ENCODE measurements at regions of chr10 and their contacts with region 1.

Region 1: DNA sequence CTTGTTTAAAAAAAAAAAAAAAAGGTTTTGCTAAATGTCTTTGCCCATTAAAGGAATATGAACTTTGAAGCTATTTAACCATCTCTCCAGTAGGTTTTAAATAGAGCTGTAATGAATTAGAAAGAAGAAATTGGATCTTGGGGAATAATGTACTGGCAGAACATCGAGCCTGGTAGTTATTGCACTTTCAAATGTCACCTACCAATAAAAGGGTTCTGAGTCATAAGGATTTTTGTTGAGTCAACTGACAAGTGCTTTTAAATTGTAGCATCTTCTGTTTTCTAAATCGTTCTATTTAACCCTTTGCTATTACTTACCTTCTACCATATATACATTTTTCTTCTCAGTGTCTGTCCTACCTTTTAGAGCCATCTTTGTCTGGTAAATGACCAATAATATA is 10.7 kb downstream of the CUTC start:
- DNase-seq: no peak
- ATAC-seq: peak; percentile 86 to 88
- H3K4me3 ChIP-seq: peak overlapping the region in 2 of 4 donors; percentile 20
- H3K27ac ChIP-seq: peak overlapping the region; percentile 95 to 99 (median 99)
- H3K4me1 ChIP-seq: peaks cover 76 to 80% of the 10 kb centered on the region in 2 donors
- H3K27me3 ChIP-seq: no peaks in the 10 kb centered on the region
- CTCF ChIP-seq: peak in 1 of 5 experiments; percentile 24
- POLR2A ChIP-seq: no peak

Region 2: DNA sequence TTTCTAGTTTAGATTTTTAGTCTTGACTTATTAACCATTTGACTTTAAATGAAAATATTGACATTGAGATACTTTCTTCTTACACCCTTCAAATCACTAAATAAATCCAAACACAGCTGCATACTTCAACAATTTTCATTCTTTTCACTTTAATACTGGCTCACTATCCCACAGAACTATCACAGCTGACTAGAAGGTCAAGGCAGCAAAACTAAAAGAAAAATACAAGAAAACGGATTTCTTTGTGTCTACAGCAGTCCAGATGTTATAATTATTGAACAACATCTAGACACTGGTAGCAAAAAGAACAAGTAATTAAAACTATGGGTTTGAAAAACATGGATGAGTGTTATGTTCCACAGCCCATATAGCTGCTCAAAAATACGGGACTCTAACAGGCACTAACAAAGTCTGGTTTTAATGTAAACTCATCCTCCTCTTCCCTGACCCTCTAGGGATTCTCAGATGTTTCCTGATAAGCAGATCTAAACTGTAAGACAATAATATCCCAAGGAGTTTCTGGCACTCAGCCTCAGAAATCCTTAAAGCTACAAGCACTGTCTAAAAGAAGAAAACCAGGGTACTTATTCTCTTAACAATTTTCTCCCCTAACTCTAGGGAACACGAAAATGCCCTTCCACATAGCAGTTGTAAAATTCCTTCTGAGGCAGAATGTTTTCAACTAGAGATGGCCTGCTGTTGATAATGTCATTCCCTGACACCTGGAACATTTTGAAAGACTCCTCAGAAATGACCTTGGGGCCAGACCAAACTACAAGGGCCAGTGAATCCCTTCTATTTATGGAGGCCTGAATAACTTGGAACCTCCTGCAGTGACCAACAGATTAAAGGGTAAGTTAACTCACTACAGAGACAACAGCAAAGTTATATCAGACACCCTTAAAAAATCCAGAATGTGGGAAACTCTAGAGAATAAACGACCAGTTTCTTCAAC is 254.2 kb after region 1 on chr10:
- in situ Hi-C with region 1: no loop called
- intact Hi-C with region 1: loop called (anchors 5 kb)
- DNase-seq: peak; percentile 10 to 50
- ATAC-seq: peak; percentile 86 to 90
- H3K4me3 ChIP-seq: no peak overlapping the region
- H3K27ac ChIP-seq: peak overlapping the region; percentile 78 to 84 (median 80)
- H3K4me1 ChIP-seq: peaks cover 65 to 72% of the 10 kb centered on the region in 2 donors
- H3K27me3 ChIP-seq: no peaks in the 10 kb centered on the region
- CTCF ChIP-seq: no peak
- POLR2A ChIP-seq: no peak